Activated CD8-positive, alpha-beta T cell treated with anti-CD3 and anti-CD28 coated beads for 36 hours (primary cell): ENCODE measurements at regions of chr1 and their contacts with region 1.

Region 1: DNA sequence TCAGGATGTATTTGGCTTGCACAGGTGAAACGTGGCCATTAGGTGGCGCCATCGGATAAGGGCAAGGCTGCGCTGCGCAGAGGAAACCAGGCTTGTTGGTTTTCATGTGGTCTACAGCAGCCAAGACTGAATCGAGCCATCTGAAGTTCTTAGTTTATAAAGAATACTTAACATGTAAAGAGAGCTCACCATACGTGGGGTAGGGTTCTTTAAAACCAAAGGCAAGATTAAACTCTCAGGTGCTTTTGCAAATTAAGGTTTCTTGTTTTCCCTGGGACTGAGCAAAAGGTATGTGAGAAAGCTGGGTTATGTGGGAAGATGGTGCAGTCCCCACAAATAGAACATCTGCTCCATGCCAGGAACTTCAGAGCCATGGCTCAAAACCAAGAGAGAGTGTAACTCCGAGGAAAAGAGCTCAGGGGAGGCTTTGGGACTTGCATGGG is 9.3 kb downstream of the MASP2 start:
- DNase-seq: peak; percentile 92
- ATAC-seq: peak; percentile 99
- H3K4me3 Mint-ChIP-seq: no peak overlapping the region
- H3K27ac Mint-ChIP-seq: no peak overlapping the region
- H3K4me1 Mint-ChIP-seq: peaks cover 5% of the 10 kb centered on the region
- H3K27me3 Mint-ChIP-seq: peaks cover 2% of the 10 kb centered on the region
- CTCF ChIP-seq: peak; percentile 97

Region 2: DNA sequence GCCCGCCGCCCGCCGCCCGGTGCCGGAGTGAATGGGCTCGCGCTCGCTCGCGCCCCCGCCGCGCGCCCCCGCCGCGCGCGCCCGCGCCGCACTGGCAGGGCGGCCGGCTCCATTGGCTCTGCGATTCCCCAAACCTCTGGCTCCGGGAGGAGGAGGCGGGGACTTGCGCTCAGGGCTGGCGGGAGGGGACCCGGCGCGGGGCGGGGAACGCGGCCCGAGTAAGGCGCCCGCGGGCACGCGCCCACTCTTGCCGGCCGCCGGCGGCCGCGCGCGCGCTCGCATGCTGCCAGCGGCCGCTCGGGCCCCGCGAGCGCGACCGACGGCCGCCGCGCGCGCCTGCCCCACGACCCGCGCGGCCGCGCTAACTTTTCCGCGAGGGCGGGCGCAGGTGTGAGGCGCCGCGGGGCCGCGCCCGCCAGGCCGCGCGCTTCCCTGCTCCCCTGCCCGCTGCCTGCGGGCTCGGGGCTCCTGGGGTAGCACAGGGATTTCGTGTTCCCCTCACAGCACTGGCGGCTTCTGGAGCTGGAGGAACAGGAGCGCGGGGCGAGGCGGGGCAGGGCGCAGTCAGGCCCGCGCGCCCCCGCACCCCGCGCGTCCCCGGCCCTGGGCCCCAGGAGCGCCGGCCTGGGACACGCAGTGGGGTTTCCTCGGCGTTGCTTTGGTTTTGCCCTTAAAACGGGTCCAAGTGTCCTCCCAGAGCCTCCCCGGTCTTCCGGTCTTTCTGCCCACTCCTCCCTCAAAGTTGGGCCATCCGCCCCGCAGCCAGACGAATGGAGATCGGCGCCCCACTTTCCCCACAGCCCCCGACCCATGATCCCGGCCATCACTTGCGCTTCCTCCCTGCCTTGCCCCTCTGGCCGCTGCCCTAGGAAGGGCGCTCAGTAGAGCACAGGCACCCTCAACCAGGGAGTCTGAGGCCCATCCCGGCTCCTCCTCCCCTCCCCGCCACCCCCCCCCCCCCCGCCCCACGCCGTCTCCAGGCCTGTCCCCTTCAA is 342.8 kb before region 1 on chr1:
- CTCF ChIA-PET with region 1: no interaction called
- POLR2A ChIA-PET with region 1: no interaction called
- intact Hi-C with region 1: no loop called
- DNase-seq: peak; percentile 77
- ATAC-seq: peak; percentile 57
- H3K4me3 Mint-ChIP-seq: peak overlapping the region; percentile 63
- H3K27ac Mint-ChIP-seq: no peak overlapping the region
- H3K4me1 Mint-ChIP-seq: peaks cover 40% of the 10 kb centered on the region
- H3K27me3 Mint-ChIP-seq: peaks cover 4% of the 10 kb centered on the region
- CTCF ChIP-seq: no peak

Region 3: DNA sequence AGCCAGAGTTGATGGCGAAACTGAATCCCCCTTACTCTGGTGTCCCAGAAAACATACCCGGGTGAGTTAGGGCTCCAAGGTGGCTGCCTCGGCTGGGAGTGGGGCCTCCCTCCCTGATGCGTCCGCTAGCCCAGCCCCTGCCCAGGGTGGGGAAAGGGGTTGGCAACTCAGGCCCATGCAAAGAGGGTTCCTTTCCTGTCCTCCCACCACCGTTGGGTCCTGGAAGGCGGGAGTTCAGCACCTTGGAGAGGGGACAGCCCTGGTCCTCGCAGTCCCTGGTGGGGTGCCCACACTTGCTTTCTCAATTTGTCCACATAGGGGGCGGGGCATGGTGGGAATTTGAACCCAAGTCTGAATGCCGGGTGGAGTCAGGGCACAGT is 16.0 kb after region 1 on chr1:
- CTCF ChIA-PET with region 1: interaction called, 62 read pairs
- POLR2A ChIA-PET with region 1: interaction called, 25 read pairs
- intact Hi-C with region 1: no loop called
- DNase-seq: no peak
- ATAC-seq: no peak
- H3K4me3 Mint-ChIP-seq: no peak overlapping the region
- H3K27ac Mint-ChIP-seq: no peak overlapping the region
- H3K4me1 Mint-ChIP-seq: peaks cover 14% of the 10 kb centered on the region
- H3K27me3 Mint-ChIP-seq: no peaks in the 10 kb centered on the region
- CTCF ChIP-seq: no peak

Region 4: GRCh38 chr1:11080931-11081330 is 43.2 kb after region 1 on chr1:
- CTCF ChIA-PET with region 1: interaction called, 20 read pairs
- POLR2A ChIA-PET with region 1: interaction called, 6 read pairs
- intact Hi-C with region 1: no loop called
- DNase-seq: no peak
- ATAC-seq: no peak
- H3K4me3 Mint-ChIP-seq: no peak overlapping the region
- H3K27ac Mint-ChIP-seq: no peak overlapping the region
- H3K4me1 Mint-ChIP-seq: no peaks in the 10 kb centered on the region
- H3K27me3 Mint-ChIP-seq: no peaks in the 10 kb centered on the region
- CTCF ChIP-seq: no peak

Region 5: DNA sequence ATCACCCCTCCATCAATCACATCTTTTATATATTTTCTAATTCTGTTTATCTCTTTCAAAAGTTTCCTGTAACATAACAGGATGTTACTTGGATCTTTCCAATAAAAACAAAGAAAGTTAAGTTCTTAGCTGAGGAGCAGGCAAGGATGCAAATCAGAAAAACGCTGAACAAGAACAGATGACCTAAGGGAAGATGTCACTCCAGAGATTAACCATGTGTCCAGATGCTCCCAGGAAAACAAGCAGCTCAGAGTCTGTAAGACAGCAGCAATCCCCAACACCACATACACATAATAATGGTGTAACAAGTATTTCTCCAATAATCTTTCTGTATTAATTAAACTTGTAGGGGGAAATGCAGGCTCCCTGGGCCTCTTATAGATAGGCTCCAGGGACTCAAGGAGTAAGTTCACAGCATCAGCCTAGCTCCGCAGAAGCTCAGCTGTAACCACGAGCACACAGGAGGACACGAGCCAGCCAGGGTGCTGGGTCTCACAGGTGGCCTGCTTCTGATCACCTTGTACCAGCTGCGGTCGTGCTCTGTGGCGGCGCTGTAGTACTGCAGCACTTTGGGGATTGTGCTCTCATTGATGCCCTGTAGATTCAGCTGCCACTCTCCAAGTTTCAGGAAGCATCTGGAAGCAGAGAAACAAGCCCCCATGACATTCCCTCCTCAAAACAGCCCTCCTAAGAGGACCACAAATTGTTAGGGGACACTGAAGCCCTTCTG is 95.0 kb after region 1 on chr1:
- CTCF ChIA-PET with region 1: interaction called, 14 read pairs
- POLR2A ChIA-PET with region 1: no interaction called
- intact Hi-C with region 1: no loop called
- DNase-seq: no peak
- ATAC-seq: no peak
- H3K4me3 Mint-ChIP-seq: no peak overlapping the region
- H3K27ac Mint-ChIP-seq: no peak overlapping the region
- H3K4me1 Mint-ChIP-seq: no peaks in the 10 kb centered on the region
- H3K27me3 Mint-ChIP-seq: no peaks in the 10 kb centered on the region
- CTCF ChIP-seq: no peak

Region 6: DNA sequence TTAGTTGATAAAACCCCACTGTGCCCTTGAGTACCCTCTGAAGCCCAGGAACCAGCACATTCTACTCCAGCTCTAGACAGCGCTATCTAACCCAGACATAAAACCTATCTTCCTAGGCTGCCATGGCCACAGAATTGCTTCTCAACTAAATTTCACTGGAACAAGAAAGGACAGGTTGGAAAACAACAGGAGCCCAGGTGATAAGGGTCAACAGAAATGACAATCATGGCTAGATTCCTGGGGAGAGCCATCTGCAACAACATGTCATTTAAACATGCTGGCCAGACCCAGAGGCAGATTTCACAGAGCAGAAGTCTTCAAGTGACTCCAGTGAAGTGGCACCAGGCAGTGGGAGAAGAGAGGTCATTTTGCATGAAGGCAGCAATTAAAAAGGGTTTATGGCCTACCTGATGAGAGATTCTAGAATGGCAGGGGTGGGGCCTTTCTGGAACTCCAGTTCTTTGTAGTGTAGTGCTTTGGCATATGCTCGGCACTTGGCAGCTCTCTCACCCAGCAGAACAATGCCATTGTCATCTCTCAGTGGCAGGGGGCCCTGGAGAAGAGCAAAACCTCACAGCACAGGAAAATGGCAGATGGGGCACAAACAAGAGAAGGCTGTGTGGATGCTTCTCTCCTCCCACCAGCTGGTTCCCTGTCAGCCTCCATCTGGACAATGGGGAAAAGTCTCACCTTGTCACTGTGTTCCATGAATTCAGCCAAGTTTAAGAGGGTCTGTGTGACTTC is 161.3 kb after region 1 on chr1:
- CTCF ChIA-PET with region 1: interaction called, 12 read pairs
- POLR2A ChIA-PET with region 1: no interaction called
- intact Hi-C with region 1: no loop called
- DNase-seq: no peak
- ATAC-seq: no peak
- H3K4me3 Mint-ChIP-seq: no peak overlapping the region
- H3K27ac Mint-ChIP-seq: no peak overlapping the region
- H3K4me1 Mint-ChIP-seq: no peaks in the 10 kb centered on the region
- H3K27me3 Mint-ChIP-seq: no peaks in the 10 kb centered on the region
- CTCF ChIP-seq: no peak

Region 7: GRCh38 chr1:11262171-11263049 is 224.6 kb after region 1 on chr1 and contains the start of gene MTOR:
- CTCF ChIA-PET with region 1: interaction called, 10 read pairs
- POLR2A ChIA-PET with region 1: interaction called, 4 read pairs
- intact Hi-C with region 1: no loop called
- DNase-seq: peak; percentile 99
- ATAC-seq: peak; percentile 98
- H3K4me3 Mint-ChIP-seq: peak within 1 kb of the TSS; percentile 84
- H3K27ac Mint-ChIP-seq: peak within 1 kb of the TSS; percentile 88
- H3K4me1 Mint-ChIP-seq: peaks cover 13% of the 10 kb centered on the region
- H3K27me3 Mint-ChIP-seq: peaks cover 1% of the 10 kb centered on the region
- CTCF ChIP-seq: peak; percentile 29
- total RNA-seq, gene MTOR: 34.7 to 36.8 TPM

Region 8: GRCh38 chr1:11777658-11778322 is 740.0 kb after region 1 on chr1:
- CTCF ChIA-PET with region 1: no interaction called
- POLR2A ChIA-PET with region 1: no interaction called
- intact Hi-C with region 1: no loop called
- DNase-seq: no peak
- ATAC-seq: no peak
- H3K4me3 Mint-ChIP-seq: no peak overlapping the region
- H3K27ac Mint-ChIP-seq: no peak overlapping the region
- H3K4me1 Mint-ChIP-seq: no peaks in the 10 kb centered on the region
- H3K27me3 Mint-ChIP-seq: no peaks in the 10 kb centered on the region
- CTCF ChIP-seq: no peak